Activated CD4-positive, alpha-beta T cell treated with anti-CD3 and anti-CD28 coated beads, Interleukin-2, amount 10 ng/mL, durations not matched to agents 7 days and 5 days (primary cell): ENCODE measurements at regions of chr5 and their contacts with region 1.

Region 1: GRCh38 chr5:181223058-181223728 is at the start of gene TRIM41:
- DNase-seq: peak; percentile 97
- H3K4me3 Mint-ChIP-seq: peak within 1 kb of the TSS; percentile 97
- H3K27ac Mint-ChIP-seq: peak within 1 kb of the TSS; percentile 99
- H3K4me1 Mint-ChIP-seq: peaks cover 67% of the 10 kb centered on the region
- H3K27me3 Mint-ChIP-seq: peaks cover 5% of the 10 kb centered on the region
- total RNA-seq, gene TRIM41: 34.7 to 36.9 TPM

Region 2: DNA sequence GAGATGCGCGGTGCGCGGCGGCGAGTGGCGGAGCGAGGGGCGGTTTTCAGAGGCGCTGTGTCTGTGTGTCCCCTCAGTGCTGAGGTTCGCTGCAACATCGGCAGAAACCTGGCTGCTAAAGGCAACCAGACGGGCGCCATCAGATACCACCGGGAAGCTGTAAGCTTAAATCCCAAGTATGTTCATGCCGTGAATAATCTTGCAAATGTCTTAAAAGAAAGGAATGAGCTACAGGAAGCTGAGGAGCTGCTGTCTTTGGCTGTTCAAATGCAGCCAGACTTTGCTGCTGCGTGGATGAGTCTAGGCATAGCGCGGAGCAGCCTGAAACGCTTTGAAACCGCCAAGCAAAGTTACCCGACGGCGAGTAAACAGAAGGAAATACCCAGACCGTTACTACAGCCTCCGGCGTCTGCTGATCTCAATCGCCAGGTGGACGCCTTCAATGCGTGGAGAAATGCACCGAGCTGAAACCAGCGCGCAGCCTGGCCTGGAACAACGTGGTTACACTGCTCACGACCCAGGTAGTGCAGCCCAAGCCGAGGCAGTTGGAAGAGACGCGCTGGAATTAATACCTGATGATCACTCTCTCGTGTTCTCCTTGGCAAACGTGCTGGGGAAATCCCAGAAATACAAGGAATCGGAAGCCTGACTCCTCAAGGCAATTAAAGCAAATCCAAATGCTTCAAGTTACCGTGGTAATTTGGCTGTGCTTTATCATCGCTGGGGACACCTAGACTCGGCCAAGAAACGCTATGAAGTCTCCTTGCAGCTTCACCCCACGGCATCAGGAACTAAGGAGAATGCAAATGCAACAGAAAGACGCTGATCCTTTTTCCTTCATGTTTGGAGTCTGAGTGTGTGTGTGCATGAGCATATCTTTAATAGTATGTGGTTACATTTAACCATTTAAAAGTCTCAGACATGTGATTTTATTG is 108.1 kb before region 1 on chr5:
- CTCF ChIA-PET with region 1: no interaction called
- POLR2A ChIA-PET with region 1: no interaction called
- DNase-seq: no peak
- H3K4me3 Mint-ChIP-seq: no peak overlapping the region
- H3K27ac Mint-ChIP-seq: no peak overlapping the region
- H3K4me1 Mint-ChIP-seq: peaks cover 11% of the 10 kb centered on the region
- H3K27me3 Mint-ChIP-seq: peaks cover 52% of the 10 kb centered on the region

Region 3: DNA sequence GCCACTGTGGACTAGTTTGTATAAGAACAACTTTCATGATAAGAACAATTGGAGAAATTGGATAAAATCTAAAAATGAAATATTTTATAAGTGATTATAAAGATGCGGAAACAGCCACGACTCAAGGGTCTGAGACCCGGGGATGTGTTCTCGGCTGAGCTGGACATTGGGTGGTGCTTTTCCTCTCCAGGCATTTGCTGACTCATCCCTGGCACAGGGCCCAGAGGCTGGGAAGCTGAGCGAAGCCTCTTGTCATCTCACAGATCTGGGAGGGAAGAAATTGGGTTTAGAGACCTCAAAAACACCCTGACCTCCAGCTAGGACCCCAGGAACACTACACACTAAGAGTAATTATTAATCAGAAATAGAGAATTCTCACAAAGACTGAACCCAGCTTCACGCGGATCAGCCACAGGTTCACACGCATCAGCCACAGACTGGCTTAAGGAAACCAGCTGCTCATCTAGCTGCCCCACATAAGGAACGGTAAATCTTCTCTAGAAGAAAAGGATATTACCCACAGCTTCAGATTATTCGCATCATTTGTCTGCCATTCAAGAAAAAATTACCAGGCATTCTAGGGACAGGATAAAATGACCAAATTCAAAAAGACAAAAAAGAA is 89.5 kb before region 1 on chr5:
- CTCF ChIA-PET with region 1: no interaction called
- POLR2A ChIA-PET with region 1: no interaction called
- DNase-seq: no peak
- H3K4me3 Mint-ChIP-seq: no peak overlapping the region
- H3K27ac Mint-ChIP-seq: no peak overlapping the region
- H3K4me1 Mint-ChIP-seq: no peaks in the 10 kb centered on the region
- H3K27me3 Mint-ChIP-seq: peaks cover 24% of the 10 kb centered on the region

Region 4: DNA sequence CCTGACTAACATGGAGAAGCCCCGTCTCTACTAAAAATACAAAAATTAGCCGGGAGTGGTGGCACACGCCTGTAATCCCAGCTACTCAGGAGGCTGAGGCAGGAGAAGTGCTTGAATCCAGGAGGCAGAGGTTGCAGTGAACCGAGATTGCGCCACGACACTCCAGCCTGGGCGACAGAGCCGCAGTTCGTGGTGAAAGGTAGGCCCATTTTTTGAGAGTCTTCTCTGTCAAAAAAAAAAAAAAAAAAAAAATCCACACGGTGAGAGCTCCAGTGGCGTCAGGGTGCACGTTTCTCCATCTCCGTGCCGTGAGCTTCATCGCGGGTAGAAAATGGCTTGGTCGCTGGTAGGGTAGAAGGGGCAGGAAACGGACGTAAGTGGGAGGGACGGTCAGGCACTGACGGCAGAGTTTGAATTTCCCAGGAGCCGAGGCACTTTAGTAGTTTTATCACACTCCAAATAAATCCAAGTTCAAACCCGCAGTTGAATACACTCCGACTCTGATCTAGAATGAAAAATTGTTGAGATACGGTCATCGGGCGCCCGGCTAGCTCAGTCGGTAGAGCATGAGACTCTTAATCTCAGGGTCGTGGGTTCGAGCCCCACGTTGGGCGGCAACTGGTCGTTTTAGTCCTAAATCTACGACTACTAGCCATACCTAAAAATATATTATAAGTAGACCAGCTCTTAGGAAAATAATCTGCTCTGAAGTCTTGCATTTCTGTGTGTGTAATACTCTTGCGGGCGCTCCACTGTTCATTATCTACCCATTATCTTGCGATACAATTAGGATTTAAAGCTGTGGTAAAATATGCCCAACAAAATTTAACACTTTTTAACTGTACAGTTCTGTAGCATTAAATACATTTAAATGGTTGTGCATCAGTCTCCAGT is 15.7 kb before region 1 on chr5:
- CTCF ChIA-PET with region 1: interaction called, 13 read pairs
- POLR2A ChIA-PET with region 1: no interaction called
- DNase-seq: peak; percentile 70
- H3K4me3 Mint-ChIP-seq: peak overlapping the region; percentile 74
- H3K27ac Mint-ChIP-seq: peak overlapping the region; percentile 79
- H3K4me1 Mint-ChIP-seq: peaks cover 34% of the 10 kb centered on the region
- H3K27me3 Mint-ChIP-seq: peaks cover 31% of the 10 kb centered on the region

Region 5: DNA sequence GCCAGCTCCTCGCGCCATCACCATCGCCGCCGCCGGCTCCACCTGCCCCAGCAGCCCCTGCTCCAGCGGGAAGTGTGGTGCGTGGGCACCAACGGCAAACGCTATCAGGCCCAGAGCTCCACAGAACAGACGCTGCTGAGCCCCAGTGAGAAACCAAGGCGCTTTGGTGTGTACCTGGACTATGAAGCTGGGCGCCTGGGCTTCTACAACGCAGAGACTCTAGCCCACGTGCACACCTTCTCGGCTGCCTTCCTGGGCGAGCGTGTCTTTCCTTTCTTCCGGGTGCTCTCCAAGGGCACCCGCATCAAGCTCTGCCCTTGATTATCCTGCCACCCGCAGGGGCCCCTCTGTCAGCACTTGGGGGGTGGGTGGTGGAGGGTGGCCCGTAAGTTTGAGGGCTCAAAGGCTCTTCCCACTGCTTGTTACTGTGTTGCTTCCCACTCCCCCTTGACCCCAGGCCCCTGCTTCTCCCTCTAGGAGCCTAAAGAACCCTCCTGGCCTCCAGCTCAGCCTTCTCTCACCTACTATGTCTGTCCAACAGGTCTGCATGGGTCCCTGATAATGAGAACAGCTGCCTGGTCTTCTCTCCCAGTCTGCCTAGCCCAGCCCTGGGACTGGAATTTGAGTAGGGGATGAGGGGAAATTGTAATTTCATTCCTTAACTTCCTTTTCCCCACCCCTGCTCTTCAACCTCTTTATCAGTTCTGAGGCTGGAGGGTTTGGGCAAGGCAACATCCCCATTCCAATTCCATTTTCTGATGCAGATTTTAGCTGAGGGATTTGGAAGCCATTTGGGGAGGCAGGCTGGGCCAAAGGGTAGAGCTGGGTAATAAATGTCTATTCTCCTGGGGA is 11.5 kb after region 1 on chr5:
- CTCF ChIA-PET with region 1: interaction called, 4 read pairs
- POLR2A ChIA-PET with region 1: interaction called, 10 read pairs
- DNase-seq: no peak
- H3K4me3 Mint-ChIP-seq: no peak overlapping the region
- H3K27ac Mint-ChIP-seq: peak overlapping the region; percentile 9
- H3K4me1 Mint-ChIP-seq: peaks cover 36% of the 10 kb centered on the region
- H3K27me3 Mint-ChIP-seq: no peaks in the 10 kb centered on the region